WTC11 (cell line): ENCODE measurements at regions of chr3 and their contacts with region 1.

Region 1: GRCh38 chr3:113287803-113288648 is 76.7 kb downstream of the BOC start:
- DNase-seq: peak; percentile 62
- ATAC-seq: peak; percentile 74
- H3K4me3 Mint-ChIP-seq: no peak overlapping the region
- H3K27ac Mint-ChIP-seq: no peak overlapping the region
- H3K4me1 Mint-ChIP-seq: no peaks in the 10 kb centered on the region
- H3K27me3 Mint-ChIP-seq: no peaks in the 10 kb centered on the region; the same call in 1 of the 2 replicates
- CTCF ChIP-seq: peak; percentile 95

Region 2: DNA sequence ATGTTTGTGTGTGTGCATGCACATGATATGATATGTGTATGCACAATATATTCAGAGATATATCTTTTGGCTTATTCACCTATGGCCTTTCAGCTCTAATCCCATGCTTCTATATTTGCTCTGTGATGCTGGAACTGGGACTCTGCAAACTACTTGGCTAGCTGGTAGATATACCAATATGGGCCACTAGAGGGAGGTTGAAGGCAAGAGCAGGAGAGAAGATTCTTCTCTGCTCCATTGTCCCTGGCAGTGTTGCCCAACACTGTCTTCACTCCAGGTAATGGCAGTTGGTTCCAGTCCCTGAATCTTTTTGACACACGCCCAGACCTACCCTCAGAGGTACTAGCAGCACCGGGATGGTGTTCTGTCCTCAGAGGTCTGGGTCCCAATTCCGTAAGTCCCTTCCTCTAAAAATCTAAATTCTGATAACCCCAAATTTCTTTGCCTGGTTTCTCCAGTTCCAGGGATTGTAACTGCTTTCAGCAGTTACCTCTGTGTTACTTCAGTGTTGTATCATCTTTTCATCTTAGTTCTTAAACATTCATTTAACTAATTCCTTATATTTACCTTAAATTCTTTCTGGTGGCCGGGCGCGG is 252.5 kb before region 1 on chr3:
- CTCF ChIA-PET with region 1: interaction called, 24 read pairs
- POLR2A ChIA-PET with region 1: no interaction called
- DNase-seq: peak; percentile 33
- ATAC-seq: peak; percentile 99
- H3K4me3 Mint-ChIP-seq: no peak overlapping the region
- H3K27ac Mint-ChIP-seq: no peak overlapping the region
- H3K4me1 Mint-ChIP-seq: 0 out of 2 replicates have a peak, but pooled peaks cover 3% of the 10 kb centered on the region
- H3K27me3 Mint-ChIP-seq: no peaks in the 10 kb centered on the region
- CTCF ChIP-seq: peak; percentile 93

Region 3: DNA sequence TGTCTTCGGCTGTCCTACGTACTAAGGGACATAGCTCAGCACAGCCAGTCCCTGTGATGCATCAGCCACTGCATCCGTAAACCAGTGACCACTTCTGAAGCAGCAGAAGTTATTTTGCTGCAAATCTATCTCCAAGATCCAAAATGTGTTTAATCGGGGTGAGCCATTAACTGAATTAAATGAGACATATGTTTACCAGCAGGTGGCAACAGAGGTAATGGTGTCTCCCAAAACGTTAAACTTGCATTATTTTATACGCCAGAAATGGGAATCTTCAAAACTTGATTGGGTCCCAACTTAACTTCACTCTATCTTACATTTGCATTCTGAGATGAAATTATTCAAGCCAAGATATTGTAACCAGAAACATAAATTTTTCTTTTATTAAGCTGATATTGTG is 152.0 kb before region 1 on chr3:
- CTCF ChIA-PET with region 1: interaction called, 21 read pairs
- POLR2A ChIA-PET with region 1: no interaction called
- DNase-seq: no peak
- ATAC-seq: no peak; the same call in 1 of the 2 replicates
- H3K4me3 Mint-ChIP-seq: no peak overlapping the region
- H3K27ac Mint-ChIP-seq: no peak overlapping the region
- H3K4me1 Mint-ChIP-seq: peaks cover 9% of the 10 kb centered on the region
- H3K27me3 Mint-ChIP-seq: peaks cover 3% of the 10 kb centered on the region; the same call in 1 of the 2 replicates
- CTCF ChIP-seq: no peak

Region 4: GRCh38 chr3:113211330-113212149 is 76.5 kb before region 1 on chr3 and contains the start of gene BOC:
- CTCF ChIA-PET with region 1: interaction called, 10 read pairs
- POLR2A ChIA-PET with region 1: no interaction called
- DNase-seq: peak; percentile 43
- ATAC-seq: peak; percentile 55
- H3K4me3 Mint-ChIP-seq: peak within 1 kb of the TSS; percentile 85
- H3K27ac Mint-ChIP-seq: peak within 1 kb of the TSS; percentile 77; the same call in 1 of the 2 replicates
- H3K4me1 Mint-ChIP-seq: peaks cover 37% of the 10 kb centered on the region
- H3K27me3 Mint-ChIP-seq: peaks cover 28% of the 10 kb centered on the region
- CTCF ChIP-seq: no peak
- total RNA-seq, gene BOC: 6.6 to 8.0 TPM (median 7.2 TPM) in 3 replicates

Region 5: DNA sequence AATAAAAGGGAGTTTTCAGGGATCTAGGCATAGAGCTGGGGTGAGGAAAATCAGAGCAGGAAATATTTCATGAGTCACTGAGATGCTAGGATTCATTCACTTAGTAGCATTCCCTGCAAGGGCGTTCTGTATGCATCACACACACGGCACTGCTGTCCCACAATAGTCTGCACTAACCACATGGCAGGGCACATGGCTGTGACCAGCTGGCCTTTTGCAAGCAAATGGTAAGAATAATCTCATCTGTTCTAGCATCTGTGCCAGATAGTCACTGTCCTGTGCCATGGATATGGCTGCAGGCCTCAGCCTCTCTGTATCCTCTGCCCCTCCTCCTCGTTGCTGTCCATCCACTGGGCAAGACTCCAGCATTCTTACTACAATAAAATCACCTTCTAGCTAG is 38.9 kb before region 1 on chr3:
- CTCF ChIA-PET with region 1: no interaction called
- POLR2A ChIA-PET with region 1: no interaction called
- DNase-seq: no peak
- ATAC-seq: no peak
- H3K4me3 Mint-ChIP-seq: no peak overlapping the region
- H3K27ac Mint-ChIP-seq: no peak overlapping the region
- H3K4me1 Mint-ChIP-seq: peaks cover 40% of the 10 kb centered on the region
- H3K27me3 Mint-ChIP-seq: no peaks in the 10 kb centered on the region
- CTCF ChIP-seq: no peak

Region 6: GRCh38 chr3:113264283-113265131 is 23.5 kb before region 1 on chr3:
- CTCF ChIA-PET with region 1: interaction called, 31 read pairs
- POLR2A ChIA-PET with region 1: no interaction called
- DNase-seq: peak; percentile 58
- ATAC-seq: peak; percentile 95
- H3K4me3 Mint-ChIP-seq: 0 out of 2 replicates have a peak overlapping the region, but pooled peaks have one; percentile 2
- H3K27ac Mint-ChIP-seq: peak overlapping the region; percentile 64
- H3K4me1 Mint-ChIP-seq: peaks cover 50% of the 10 kb centered on the region
- H3K27me3 Mint-ChIP-seq: peaks cover 2% of the 10 kb centered on the region; the same call in 1 of the 2 replicates
- CTCF ChIP-seq: no peak

Region 7: DNA sequence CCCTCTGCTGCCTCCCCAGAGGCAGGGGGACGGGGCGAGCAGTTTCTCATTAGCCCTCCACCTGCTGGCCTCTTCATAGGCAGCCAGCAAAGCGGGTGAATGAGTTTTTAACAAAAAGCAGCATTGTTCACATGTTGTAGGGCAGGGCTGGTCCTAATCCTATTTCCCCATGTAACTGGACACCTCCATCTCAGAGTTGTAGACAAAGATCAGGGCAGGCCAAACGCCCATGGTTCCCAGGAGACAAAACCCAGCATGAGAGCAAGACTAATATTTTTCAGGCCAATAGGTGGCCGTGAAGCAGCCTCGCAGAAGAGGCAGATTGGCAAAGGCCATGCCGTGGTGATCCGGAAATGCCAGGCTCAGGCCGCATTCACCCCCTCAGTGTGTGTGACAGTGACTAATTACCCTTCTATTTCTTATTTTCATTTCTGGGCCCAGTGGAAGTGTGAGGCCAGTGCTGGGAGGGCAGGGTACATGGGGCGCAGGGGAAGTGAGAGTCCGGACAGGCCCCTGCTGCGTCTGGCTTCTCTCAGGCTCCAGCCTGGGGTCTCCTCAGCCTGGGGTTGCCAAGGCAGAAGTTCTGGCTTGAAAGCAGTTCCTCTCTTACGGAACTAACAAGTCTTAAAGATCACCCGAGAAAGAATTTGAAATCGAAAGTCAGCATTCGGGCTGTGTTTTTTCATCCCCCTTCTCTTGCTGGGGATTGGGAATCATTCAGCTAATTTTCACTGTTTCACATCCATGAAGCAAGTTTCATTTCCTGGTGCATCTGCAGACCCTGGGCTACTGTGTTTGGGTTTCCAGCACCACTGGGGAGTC is 11.9 kb before region 1 on chr3:
- CTCF ChIA-PET with region 1: interaction called, 29 read pairs
- POLR2A ChIA-PET with region 1: no interaction called
- DNase-seq: no peak
- ATAC-seq: peak; percentile 43
- H3K4me3 Mint-ChIP-seq: no peak overlapping the region
- H3K27ac Mint-ChIP-seq: peak overlapping the region; percentile 82
- H3K4me1 Mint-ChIP-seq: peaks cover 17% of the 10 kb centered on the region
- H3K27me3 Mint-ChIP-seq: no peaks in the 10 kb centered on the region
- CTCF ChIP-seq: no peak

Region 8: DNA sequence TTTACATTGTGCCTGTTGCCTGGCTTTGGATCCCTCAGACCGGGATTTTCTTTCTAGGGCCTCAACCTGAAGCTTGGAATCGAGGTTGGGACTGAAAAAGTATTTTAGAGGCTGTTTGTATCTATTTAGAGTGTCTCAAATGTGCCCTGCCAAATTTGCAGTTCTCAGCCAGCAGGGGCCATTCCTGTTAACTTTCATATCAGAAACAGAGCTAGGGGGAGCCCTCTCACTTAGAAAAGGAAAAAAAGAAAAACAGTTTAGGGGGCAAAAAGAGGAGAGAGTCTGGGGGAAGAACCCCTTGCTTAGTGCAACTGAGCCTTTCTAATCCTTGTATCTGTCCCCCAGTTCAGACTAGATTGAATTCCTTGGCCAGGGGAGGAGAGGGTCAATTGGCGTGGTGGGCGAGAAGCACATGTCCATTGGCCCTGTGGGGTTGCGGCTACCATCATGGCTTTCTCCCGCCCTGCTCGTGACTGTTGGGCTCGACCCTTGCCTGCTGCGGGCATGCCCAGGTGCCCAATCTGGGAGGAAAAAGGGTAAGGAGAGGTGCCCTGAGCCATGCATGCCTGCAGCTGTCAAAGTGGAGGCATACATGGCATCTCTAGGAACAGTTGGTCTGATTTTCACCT is 51.7 kb after region 1 on chr3:
- CTCF ChIA-PET with region 1: interaction called, 10 read pairs
- POLR2A ChIA-PET with region 1: no interaction called
- DNase-seq: no peak
- ATAC-seq: peak; percentile 74
- H3K4me3 Mint-ChIP-seq: no peak overlapping the region
- H3K27ac Mint-ChIP-seq: no peak overlapping the region
- H3K4me1 Mint-ChIP-seq: no peaks in the 10 kb centered on the region
- H3K27me3 Mint-ChIP-seq: no peaks in the 10 kb centered on the region
- CTCF ChIP-seq: no peak